ENCODE measurements at regions of chr14 and their contacts with region 1.

Region 1: DNA sequence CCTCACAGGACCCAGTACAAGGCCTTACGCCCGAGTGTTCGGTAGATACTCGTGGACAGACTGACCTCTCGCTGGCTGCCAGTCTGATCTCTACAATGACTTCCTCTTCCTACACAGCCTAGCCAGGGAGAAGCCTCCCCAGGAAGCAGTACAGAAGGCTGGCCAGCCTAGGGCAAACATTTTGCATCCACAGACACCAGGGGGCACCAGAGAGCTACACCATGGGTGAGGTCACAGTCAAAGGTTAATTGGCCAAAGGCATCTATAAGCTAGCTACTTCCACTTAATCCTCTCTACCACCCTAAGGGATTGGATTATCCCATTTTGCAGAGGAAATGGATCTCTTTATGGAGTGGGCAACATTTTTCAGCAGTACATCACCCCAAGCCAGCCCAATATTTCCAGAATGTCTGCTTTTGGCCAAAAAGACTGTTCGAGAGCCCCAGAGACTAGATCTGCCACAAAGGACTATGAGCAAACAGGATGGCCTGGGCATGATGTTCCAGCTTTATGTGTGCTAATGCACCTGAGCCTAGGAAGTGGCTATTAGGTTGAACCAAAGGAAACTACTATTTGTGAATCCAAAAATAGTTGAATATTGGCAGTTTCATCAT is 14.6 kb upstream of the PNMA1 start:
- DNase-seq: peak; percentile 70 to 89 (median 86)
- ATAC-seq: peak; percentile 90
- H3K4me3 ChIP-seq: no peak overlapping the region
- H3K27ac ChIP-seq: peak overlapping the region; percentile 33 to 76
- H3K4me1 ChIP-seq: peaks cover 20 to 55% of the 10 kb centered on the region in 2 donors
- H3K27me3 ChIP-seq: no peaks in the 10 kb centered on the region
- CTCF ChIP-seq: peak; percentile 87 to 96

Region 2: DNA sequence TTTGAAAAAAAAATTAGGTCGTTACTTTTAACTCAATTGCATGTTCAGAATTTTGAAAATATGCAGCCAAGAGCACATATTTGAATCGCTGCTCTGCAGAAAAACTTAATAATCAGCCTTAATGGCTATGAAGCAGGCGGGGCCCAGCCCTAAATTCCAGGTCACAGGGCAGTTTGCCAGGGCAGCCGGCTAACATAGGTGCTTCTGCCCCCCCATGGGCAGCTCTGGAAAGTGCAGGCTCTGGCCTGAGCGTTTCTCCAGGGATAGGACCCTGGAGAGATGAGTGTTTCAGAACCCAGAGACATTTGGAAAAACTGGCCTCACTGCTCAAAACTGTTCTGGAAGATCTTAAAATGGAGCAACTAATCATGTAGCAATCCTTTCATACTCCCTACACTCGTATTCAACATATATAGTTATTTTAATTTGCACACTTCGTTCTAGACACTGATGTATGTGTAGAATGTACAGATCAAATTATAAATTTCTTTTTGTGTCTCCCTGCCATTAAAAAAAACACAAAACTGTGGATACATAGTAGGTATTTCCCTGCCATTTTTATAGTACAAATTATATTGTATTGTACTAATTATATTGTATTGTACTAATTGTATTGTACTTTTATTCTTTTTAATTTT is 96.8 kb after region 1 on chr14:
- intact Hi-C with region 1: loop called in 1 of 2 experiments (anchors 5 kb)
- DNase-seq: peak; percentile 82 to 93 (median 92)
- ATAC-seq: peak; percentile 98
- H3K4me3 ChIP-seq: no peak overlapping the region
- H3K27ac ChIP-seq: peak overlapping the region in 1 of 2 donors; percentile 23
- H3K4me1 ChIP-seq: peaks cover 3 to 15% of the 10 kb centered on the region in 2 donors
- H3K27me3 ChIP-seq: no peaks in the 10 kb centered on the region
- CTCF ChIP-seq: peak; percentile 80 to 94

Region 3: GRCh38 chr14:73924337-73924736 is 195.5 kb after region 1 on chr14:
- intact Hi-C with region 1: no loop called
- DNase-seq: no peak
- ATAC-seq: no peak
- H3K4me3 ChIP-seq: no peak overlapping the region
- H3K27ac ChIP-seq: no peak overlapping the region
- H3K4me1 ChIP-seq: no peaks in the 10 kb centered on the region
- H3K27me3 ChIP-seq: no peaks in the 10 kb centered on the region
- CTCF ChIP-seq: no peak

Measured in left lung (tissue), 14 donors.